Heart left ventricle (tissue), 16 donors: ENCODE measurements at regions of chr15 and their contacts with region 1.

Region 1: GRCh38 chr15:30962079-30962478 is 29.3 kb downstream of the MTMR10 start:
- DNase-seq: peak in 1 of 5 donors; percentile 27
- ATAC-seq: peak in 3 of 4 donors; percentile 35 to 73 (median 42)
- H3K4me3 ChIP-seq: no peak overlapping the region
- H3K27ac ChIP-seq: no peak overlapping the region
- H3K4me1 ChIP-seq: peaks cover 0 to 21% (median 5%) of the 10 kb centered on the region in 12 donors
- H3K27me3 ChIP-seq: no peaks in the 10 kb centered on the region
- CTCF ChIP-seq: no peak
- POLR2A ChIP-seq: no peak

Region 2: GRCh38 chr15:30991255-30992072 is 29.4 kb after region 1 on chr15 and contains the start of gene MTMR10:
- intact Hi-C with region 1: no loop called
- DNase-seq: peak; percentile 61 to 88 (median 84)
- ATAC-seq: peak; percentile 70 to 98 (median 96)
- H3K4me3 ChIP-seq: peak within 1 kb of the TSS; percentile 82 to 99 (median 94)
- H3K27ac ChIP-seq: peak within 1 kb of the TSS; percentile 89 to 99 (median 96)
- H3K4me1 ChIP-seq: peaks cover 0 to 48% (median 40%) of the 10 kb centered on the region in 12 donors
- H3K27me3 ChIP-seq: no peaks in the 10 kb centered on the region
- CTCF ChIP-seq: no peak
- POLR2A ChIP-seq: peak in 1 of 2 donors; percentile 82
- total RNA-seq, gene MTMR10: 14.4 to 38.9 (median 27.8) TPM

Region 3: GRCh38 chr15:31111091-31111647 is 149.1 kb after region 1 on chr15:
- intact Hi-C with region 1: loop called in 1 of 10 experiments (anchors 10 kb)
- DNase-seq: no peak
- ATAC-seq: no peak
- H3K4me3 ChIP-seq: no peak overlapping the region
- H3K27ac ChIP-seq: no peak overlapping the region
- H3K4me1 ChIP-seq: no peaks in the 10 kb centered on the region
- H3K27me3 ChIP-seq: no peaks in the 10 kb centered on the region
- CTCF ChIP-seq: no peak
- POLR2A ChIP-seq: no peak

Region 4: DNA sequence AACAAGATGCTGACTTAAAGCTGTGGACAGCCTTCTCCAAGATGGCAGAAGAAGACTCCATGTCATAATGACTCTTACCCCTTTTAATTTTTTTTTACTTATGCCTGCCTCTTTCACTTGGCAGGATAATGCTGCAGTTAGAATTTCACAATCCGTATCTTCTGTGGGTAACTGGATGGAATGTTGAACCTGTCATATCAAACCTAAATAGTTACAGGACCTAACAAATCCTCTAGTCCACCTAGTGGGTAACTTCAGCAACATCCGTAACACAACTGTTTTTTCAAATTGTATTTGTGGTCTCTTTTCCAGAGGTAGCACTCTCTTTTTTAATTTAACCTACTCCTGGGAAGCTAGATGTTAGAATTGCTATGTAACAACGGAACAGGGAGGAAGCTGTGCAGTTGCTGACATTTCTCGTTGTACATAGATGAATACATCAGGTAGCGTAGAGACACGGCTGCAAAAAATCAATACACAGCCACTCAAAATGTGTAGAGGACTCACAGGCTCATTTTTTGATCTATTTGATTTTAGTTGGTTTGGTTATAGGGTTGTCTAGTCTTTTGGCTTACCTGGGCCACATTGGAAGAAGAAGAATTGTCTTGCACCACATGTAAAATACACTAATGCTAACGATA is 183.3 kb after region 1 on chr15:
- intact Hi-C with region 1: no loop called
- DNase-seq: no peak
- ATAC-seq: no peak
- H3K4me3 ChIP-seq: no peak overlapping the region
- H3K27ac ChIP-seq: no peak overlapping the region
- H3K4me1 ChIP-seq: no peaks in the 10 kb centered on the region
- H3K27me3 ChIP-seq: no peaks in the 10 kb centered on the region
- CTCF ChIP-seq: no peak
- POLR2A ChIP-seq: no peak